Astrocyte of the cerebellum (primary cell): ENCODE measurements at regions of chr4 and their contacts with region 1.

Region 1: GRCh38 chr4:123649645-123650391 is 253.2 kb downstream of the SPRY1 start:
- DNase-seq: peak; percentile 28
- H3K4me3 ChIP-seq: no peak overlapping the region
- CTCF ChIP-seq: no peak

Region 2: DNA sequence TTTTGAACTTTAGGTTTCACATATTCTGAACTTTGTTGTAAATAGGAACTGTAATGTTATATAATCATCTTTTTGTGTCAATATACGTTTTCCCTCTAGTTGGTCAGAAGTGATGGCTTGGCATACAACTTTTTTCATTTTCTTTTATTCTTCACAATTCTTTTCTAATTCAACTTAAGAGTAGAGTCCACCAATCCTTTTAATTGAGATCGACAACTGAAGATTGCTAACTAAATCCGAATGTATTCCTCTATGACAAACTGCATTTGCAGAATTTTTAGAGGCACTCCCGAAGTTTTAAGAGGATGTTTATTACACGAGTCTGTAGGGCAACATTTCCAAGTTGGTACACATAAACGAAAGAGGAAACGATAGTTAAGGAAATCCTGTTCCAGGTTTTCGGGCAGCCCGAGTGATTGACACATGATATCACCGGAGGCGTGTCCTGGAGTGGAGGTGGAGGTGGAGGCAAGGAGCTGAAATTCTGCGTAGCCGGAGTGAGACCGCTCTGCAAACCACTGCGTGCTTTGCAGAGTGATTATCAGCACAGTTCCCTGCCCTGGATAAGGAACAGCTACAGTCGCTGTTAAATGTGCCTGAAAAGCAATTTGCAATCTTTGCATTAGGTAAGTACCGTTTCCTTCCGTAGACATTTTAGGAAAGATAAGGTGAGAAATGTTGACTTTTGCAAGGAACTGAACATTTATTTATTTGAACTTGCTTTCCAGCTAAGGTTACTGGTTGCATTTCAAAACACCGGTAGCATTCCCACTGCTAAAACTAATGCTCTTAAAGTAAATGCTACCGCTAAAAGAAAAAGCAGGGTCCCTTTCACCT is 253.3 kb before region 1 on chr4 and contains the start of gene SPRY1:
- in situ Hi-C with region 1: loop called (anchors 25 kb)
- DNase-seq: peak; percentile 86
- H3K4me3 ChIP-seq: peak within 1 kb of the TSS; percentile 73
- CTCF ChIP-seq: no peak

Region 3: DNA sequence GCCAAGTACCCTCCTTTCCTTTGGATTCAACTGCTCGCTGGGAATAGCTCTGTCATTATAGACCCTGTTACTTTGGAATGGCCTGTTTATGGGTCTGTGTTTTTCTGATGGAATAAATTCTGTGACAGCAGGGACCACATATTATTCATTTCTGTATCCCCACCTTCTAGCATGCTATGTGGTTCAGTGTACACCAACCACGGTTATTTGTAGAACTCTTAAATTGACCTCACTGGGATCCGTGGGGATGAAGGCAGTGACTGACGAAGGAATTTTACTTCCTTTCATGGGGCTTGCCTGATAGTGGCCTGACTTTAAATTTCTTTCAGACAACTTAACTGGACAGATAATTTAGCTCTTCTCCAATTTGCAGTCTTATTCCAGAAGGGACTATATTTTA is 90.0 kb after region 1 on chr4:
- in situ Hi-C with region 1: no loop called
- DNase-seq: no peak
- H3K4me3 ChIP-seq: no peak overlapping the region
- CTCF ChIP-seq: no peak

Region 4: DNA sequence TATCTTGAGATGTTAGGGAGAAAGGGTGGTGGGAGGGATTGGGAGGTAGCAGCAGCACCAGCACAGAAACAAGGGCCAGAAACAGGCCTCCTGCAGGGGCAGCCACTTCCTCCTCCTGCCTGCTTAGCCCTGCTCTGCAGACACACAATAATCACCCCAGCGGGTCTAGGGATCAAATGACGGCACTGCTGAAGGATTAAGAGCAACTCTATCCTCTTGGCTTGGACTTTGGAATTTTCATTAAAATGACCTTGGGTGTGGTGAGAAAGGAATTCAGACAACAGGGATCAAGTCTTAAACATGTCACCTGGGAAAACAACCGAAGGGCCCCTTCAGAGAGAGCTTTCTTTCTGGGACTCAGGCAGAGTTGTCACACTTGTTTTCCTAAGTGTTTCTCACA is 100.2 kb after region 1 on chr4:
- in situ Hi-C with region 1: loop called (anchors 5 kb)
- DNase-seq: no peak
- H3K4me3 ChIP-seq: no peak overlapping the region
- CTCF ChIP-seq: no peak